Activated CD4-positive, alpha-beta T cell treated with anti-CD3 and anti-CD28 coated beads, Interleukin-2, amount 10 ng/mL, durations not matched to agents 24 days and 14 days (primary cell): ENCODE measurements at regions of chr16 and their contacts with region 1.

Region 1: GRCh38 chr16:25148568-25149205 is 37.1 kb downstream of the LCMT1 start:
- DNase-seq: no peak
- H3K4me3 Mint-ChIP-seq: no peak overlapping the region
- H3K27ac Mint-ChIP-seq: no peak overlapping the region
- H3K4me1 Mint-ChIP-seq: no peaks in the 10 kb centered on the region
- H3K27me3 Mint-ChIP-seq: no peaks in the 10 kb centered on the region

Region 2: DNA sequence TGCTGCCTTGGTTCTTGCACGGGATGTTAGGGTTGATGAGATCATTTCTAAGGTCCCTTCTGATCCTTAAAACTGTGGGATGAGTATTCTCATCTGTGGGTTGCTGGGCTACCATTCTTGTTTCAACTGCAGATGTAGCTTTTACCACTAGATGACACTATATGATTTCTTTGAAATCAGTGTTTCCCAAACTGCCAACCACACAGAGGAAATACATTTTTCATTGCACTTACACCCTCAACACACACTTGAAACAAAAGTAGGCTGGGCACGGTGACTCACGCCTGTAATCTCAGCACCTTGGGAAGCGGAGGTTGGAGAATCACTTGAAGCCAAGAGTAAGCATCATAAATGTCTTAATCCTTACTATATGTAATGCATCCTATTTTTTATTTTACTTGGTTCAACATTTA is 21.9 kb before region 1 on chr16:
- intact Hi-C with region 1: no loop called
- DNase-seq: peak; percentile 77
- H3K4me3 Mint-ChIP-seq: no peak overlapping the region
- H3K27ac Mint-ChIP-seq: peak overlapping the region; percentile 75
- H3K4me1 Mint-ChIP-seq: peaks cover 22% of the 10 kb centered on the region
- H3K27me3 Mint-ChIP-seq: no peaks in the 10 kb centered on the region

Region 3: GRCh38 chr16:25198021-25198420 is 49.3 kb after region 1 on chr16:
- intact Hi-C with region 1: loop called (anchors 5 kb)
- DNase-seq: no peak
- H3K4me3 Mint-ChIP-seq: no peak overlapping the region
- H3K27ac Mint-ChIP-seq: no peak overlapping the region
- H3K4me1 Mint-ChIP-seq: no peaks in the 10 kb centered on the region
- H3K27me3 Mint-ChIP-seq: no peaks in the 10 kb centered on the region